Activated CD4-positive, alpha-beta T cell treated with anti-CD3 and anti-CD28 coated beads for 36 hours (primary cell): ENCODE measurements at regions of chr2 and their contacts with region 1.

Region 1: GRCh38 chr2:38508311-38509039 is 94.3 kb downstream of the HNRNPLL start:
- DNase-seq: peak; percentile 92
- ATAC-seq: peak; percentile 95
- H3K4me3 Mint-ChIP-seq: no peak overlapping the region
- H3K27ac Mint-ChIP-seq: no peak overlapping the region
- H3K4me1 Mint-ChIP-seq: peaks cover 3% of the 10 kb centered on the region
- H3K27me3 Mint-ChIP-seq: peaks cover 5% of the 10 kb centered on the region

Region 2: DNA sequence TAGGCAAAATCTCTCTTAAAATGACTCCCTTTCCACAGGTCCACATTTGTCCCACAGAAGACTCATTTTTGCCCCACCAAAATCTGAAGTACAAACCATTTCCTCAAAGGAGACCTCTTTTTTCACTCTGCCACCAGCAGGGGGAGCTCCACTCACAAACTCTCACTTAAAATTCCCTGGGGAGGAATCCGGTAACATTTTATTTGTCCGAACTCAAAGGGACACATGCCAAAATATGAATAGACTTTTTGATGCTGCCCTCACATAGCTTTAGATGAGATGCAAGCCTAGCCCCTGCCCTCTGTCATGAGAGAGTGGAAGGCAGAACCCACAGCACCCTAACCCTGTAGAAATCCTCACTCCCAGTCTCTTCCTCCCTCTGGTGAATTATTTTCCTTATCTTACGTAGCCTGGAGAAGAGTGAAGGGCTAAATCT is 526.3 kb before region 1 on chr2:
- CTCF ChIA-PET with region 1: interaction called, 6 read pairs
- POLR2A ChIA-PET with region 1: no interaction called
- intact Hi-C with region 1: loop called (anchors 5 kb)
- DNase-seq: peak; percentile 74
- ATAC-seq: no peak
- H3K4me3 Mint-ChIP-seq: no peak overlapping the region
- H3K27ac Mint-ChIP-seq: no peak overlapping the region
- H3K4me1 Mint-ChIP-seq: peaks cover 4% of the 10 kb centered on the region
- H3K27me3 Mint-ChIP-seq: peaks cover 3% of the 10 kb centered on the region

Region 3: DNA sequence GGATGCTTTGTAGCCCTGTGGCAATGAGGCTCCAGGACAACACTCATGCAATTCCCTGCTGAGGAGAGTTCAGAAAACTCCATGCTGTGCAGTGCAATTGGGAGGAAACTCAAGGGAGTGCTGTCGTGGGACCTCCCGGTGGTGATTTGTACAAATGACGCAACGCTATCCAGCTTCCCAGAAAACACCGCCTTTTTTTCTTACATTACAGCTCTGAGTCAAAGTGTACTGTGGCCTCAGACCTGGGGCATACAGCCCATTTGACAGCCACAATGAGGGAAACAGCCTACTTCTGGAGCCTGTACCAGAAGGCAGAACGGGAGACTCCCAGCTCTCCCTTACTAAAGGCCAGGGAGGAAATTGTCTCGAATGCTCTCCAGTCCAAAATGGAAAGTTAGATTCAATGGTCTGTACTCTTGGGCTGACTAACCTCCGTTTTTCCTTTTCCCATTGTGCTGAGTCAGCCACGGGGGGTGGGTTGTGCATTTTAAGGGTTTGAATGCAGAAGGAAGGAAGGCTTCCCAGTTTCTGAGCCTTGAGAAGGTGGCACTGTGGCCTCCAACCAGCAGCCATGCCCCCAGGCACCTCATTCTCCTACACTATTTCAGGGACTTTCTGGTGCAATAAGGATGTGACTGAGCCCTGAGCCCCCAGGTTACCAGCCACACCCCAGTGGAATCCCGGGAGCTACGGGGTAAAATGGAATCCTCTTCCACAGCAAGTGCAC is 416.1 kb before region 1 on chr2:
- CTCF ChIA-PET with region 1: no interaction called
- POLR2A ChIA-PET with region 1: no interaction called
- intact Hi-C with region 1: no loop called
- DNase-seq: no peak
- ATAC-seq: no peak
- H3K4me3 Mint-ChIP-seq: no peak overlapping the region
- H3K27ac Mint-ChIP-seq: no peak overlapping the region
- H3K4me1 Mint-ChIP-seq: peaks cover 9% of the 10 kb centered on the region
- H3K27me3 Mint-ChIP-seq: peaks cover 45% of the 10 kb centered on the region

Region 4: DNA sequence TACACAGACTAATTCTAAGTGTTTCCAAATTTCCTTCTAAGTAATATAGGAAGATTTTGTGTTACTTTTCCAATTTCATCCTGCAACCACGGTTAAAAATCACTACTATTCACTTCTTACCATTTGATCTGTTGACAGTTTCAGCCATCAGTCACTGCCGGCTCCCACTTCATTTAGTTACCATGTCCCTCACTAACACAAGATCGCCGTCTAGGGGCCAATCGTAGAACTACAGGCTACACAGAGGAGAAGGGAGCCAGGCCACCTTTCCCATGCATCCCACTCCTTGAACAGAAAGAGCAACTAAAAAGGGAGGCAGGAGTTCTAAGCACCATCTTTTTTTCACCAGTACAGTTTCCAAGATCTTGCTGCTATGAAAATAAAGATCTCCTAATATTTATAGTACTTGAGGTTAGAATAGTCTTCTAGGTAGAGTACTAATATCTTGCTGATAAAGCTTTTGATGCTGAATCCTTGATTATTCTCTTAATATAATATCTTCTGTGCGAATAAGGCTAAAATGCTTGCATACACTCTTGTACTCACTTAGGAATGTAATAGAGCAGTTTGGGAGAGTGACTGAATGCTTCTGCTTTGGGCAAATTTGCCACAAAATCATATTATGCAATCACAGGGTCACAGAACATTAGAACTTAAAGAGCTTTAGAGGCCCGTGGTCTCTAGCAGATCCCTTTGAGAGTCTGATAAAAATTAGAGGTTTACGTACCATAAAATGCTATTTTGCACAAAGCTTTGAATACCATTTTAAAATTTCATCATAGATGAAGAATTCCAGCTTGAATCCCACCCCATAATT is 393.1 kb before region 1 on chr2:
- CTCF ChIA-PET with region 1: interaction called, 4 read pairs
- POLR2A ChIA-PET with region 1: no interaction called
- intact Hi-C with region 1: loop called in 1 of 2 experiments (anchors 2 kb)
- DNase-seq: peak; percentile 88
- ATAC-seq: peak; percentile 63
- H3K4me3 Mint-ChIP-seq: no peak overlapping the region
- H3K27ac Mint-ChIP-seq: no peak overlapping the region
- H3K4me1 Mint-ChIP-seq: no peaks in the 10 kb centered on the region
- H3K27me3 Mint-ChIP-seq: peaks cover 22% of the 10 kb centered on the region

Region 5: DNA sequence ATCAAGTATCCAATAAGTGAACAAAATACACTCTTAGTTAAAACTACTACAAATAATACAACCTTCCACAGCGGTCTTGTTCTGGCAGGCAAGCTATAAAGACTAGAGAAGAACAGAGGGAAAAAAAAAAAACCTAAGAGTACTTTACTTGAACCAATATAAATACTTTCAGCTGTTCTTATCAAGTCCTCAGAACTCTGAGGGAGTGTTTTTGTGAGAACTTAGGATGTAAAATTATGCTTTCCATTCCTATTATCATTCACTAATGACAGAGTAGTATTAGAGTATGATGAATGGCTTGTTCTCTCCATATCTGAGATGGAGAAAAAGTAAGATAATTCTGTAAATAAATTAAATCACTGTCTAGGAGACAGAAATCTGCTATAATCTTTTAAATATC is 199.7 kb before region 1 on chr2:
- CTCF ChIA-PET with region 1: interaction called, 155 read pairs
- POLR2A ChIA-PET with region 1: no interaction called
- intact Hi-C with region 1: no loop called
- DNase-seq: no peak
- ATAC-seq: no peak
- H3K4me3 Mint-ChIP-seq: no peak overlapping the region
- H3K27ac Mint-ChIP-seq: no peak overlapping the region
- H3K4me1 Mint-ChIP-seq: peaks cover 17% of the 10 kb centered on the region
- H3K27me3 Mint-ChIP-seq: no peaks in the 10 kb centered on the region

Region 6: DNA sequence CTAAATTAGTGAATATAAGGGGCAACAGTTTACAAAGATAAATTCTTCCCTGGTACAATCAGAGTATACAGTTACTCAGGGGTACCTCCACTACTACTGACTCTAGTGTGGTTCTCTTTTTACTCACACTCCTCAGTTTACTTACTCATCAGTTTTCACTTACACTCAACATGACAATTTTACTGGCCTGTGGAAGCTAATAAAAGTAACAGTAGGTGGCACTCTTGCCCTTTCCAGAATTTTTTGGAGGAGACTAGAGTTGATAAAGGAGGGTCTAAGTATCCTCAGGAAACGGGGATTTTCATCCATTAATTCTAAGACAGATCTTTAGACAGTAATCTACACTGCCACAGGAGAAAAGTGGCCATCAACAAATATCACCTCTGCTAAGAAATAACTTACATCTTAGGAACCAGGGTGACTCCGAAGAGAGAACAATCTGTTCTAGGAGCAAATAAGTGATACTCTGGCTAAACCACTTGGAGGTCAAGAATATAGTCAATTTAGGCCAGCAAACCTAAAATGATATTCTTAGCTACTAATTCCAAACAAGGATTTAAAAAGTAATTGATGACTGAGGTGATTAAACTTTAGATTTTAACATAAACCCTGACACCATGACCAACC is 192.7 kb before region 1 on chr2:
- CTCF ChIA-PET with region 1: interaction called, 155 read pairs
- POLR2A ChIA-PET with region 1: no interaction called
- intact Hi-C with region 1: loop called (anchors 1 kb)
- DNase-seq: peak; percentile 26
- ATAC-seq: peak; percentile 100
- H3K4me3 Mint-ChIP-seq: no peak overlapping the region
- H3K27ac Mint-ChIP-seq: no peak overlapping the region
- H3K4me1 Mint-ChIP-seq: peaks cover 16% of the 10 kb centered on the region
- H3K27me3 Mint-ChIP-seq: no peaks in the 10 kb centered on the region

Region 7: GRCh38 chr2:38323623-38324022 is 184.9 kb before region 1 on chr2:
- CTCF ChIA-PET with region 1: interaction called, 155 read pairs
- POLR2A ChIA-PET with region 1: no interaction called
- intact Hi-C with region 1: no loop called
- DNase-seq: no peak
- ATAC-seq: no peak
- H3K4me3 Mint-ChIP-seq: no peak overlapping the region
- H3K27ac Mint-ChIP-seq: no peak overlapping the region
- H3K4me1 Mint-ChIP-seq: peaks cover 37% of the 10 kb centered on the region
- H3K27me3 Mint-ChIP-seq: no peaks in the 10 kb centered on the region

Region 8: GRCh38 chr2:38343212-38343611 is 165.3 kb before region 1 on chr2:
- CTCF ChIA-PET with region 1: interaction called, 11 read pairs
- POLR2A ChIA-PET with region 1: no interaction called
- intact Hi-C with region 1: no loop called
- DNase-seq: no peak
- ATAC-seq: no peak
- H3K4me3 Mint-ChIP-seq: no peak overlapping the region
- H3K27ac Mint-ChIP-seq: no peak overlapping the region
- H3K4me1 Mint-ChIP-seq: peaks cover 5% of the 10 kb centered on the region
- H3K27me3 Mint-ChIP-seq: no peaks in the 10 kb centered on the region